B cell (primary cell): ENCODE measurements at regions of chr10 and their contacts with region 1.

Region 1: GRCh38 chr10:72260588-72261322 is 13.0 kb upstream of the DDIT4 start:
- DNase-seq: peak; percentile 81
- ATAC-seq: peak; percentile 81
- H3K4me3 ChIP-seq: peak overlapping the region; percentile 51 to 80 (median 73)
- H3K4me3 Mint-ChIP-seq: peak overlapping the region; percentile 94
- H3K27ac ChIP-seq: peak overlapping the region; percentile 47 to 67
- H3K27ac Mint-ChIP-seq: peak overlapping the region; percentile 89
- H3K4me1 ChIP-seq: peaks cover 48 to 68% of the 10 kb centered on the region in 2 donors
- H3K4me1 Mint-ChIP-seq: peaks cover 51% of the 10 kb centered on the region
- H3K27me3 ChIP-seq: no peaks in the 10 kb centered on the region
- H3K27me3 Mint-ChIP-seq: no peaks in the 10 kb centered on the region
- CTCF ChIP-seq: no peak

Region 2: DNA sequence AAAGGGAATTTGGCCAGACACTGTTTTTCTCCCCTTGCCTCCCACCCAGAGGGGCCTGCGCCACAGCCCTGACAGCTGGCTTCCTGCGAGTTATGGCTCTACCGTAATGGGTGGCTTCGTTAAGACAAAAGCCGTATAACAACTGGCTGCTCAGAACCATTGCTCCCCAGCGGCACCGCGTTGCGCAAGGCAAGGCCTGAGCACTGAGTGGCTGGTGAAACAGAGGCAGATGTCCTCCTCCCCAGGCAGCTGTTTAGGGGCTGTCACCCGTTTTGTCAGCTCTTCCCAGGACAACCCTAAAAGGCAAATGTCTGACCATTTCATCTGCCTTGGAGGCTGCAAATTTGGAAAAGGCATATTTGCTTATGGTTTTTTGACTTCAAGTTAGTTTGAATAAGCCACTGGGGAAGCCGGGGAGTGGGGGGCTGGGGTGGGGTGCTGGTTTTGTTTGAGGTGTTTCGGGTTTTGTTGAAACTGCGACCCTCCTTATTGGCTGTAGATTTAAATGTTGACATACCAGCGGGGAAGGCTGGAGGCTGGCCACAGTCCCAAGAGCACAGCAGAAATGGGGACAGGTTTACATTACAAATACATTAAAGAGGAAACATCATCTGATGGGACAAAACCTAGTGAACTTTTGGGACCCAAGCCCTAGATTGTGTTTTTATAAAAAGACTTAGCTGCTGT is 171.7 kb before region 1 on chr10:
- CTCF ChIA-PET with region 1: no interaction called
- POLR2A ChIA-PET with region 1: no interaction called
- intact Hi-C with region 1: loop called (anchors 5 kb)
- DNase-seq: no peak
- ATAC-seq: no peak
- H3K4me3 ChIP-seq: peak overlapping the region in 4 of 5 experiments; percentile 79 to 93 (median 88)
- H3K4me3 Mint-ChIP-seq: peak overlapping the region; percentile 100
- H3K27ac ChIP-seq: peak overlapping the region; percentile 89 to 92
- H3K27ac Mint-ChIP-seq: peak overlapping the region; percentile 100
- H3K4me1 ChIP-seq: peaks cover 24 to 33% of the 10 kb centered on the region in 2 donors
- H3K4me1 Mint-ChIP-seq: peaks cover 47% of the 10 kb centered on the region
- H3K27me3 ChIP-seq: no peaks in the 10 kb centered on the region
- H3K27me3 Mint-ChIP-seq: no peaks in the 10 kb centered on the region
- CTCF ChIP-seq: no peak

Region 3: GRCh38 chr10:72248468-72249151 is 12.1 kb before region 1 on chr10:
- CTCF ChIA-PET with region 1: interaction called, 6 read pairs
- POLR2A ChIA-PET with region 1: interaction called, 10 read pairs
- intact Hi-C with region 1: loop called (anchors 1 kb)
- DNase-seq: peak; percentile 85
- ATAC-seq: peak; percentile 76
- H3K4me3 ChIP-seq: peak overlapping the region in 4 of 5 experiments; percentile 26 to 49 (median 44)
- H3K4me3 Mint-ChIP-seq: peak overlapping the region; percentile 91
- H3K27ac ChIP-seq: peak overlapping the region; percentile 76 to 81
- H3K27ac Mint-ChIP-seq: peak overlapping the region; percentile 98
- H3K4me1 ChIP-seq: peaks cover 78 to 83% of the 10 kb centered on the region in 2 donors
- H3K4me1 Mint-ChIP-seq: peaks cover 80% of the 10 kb centered on the region
- H3K27me3 ChIP-seq: no peaks in the 10 kb centered on the region
- H3K27me3 Mint-ChIP-seq: no peaks in the 10 kb centered on the region
- CTCF ChIP-seq: no peak